ENCODE measurements at regions of chr2 and their contacts with region 1.

Region 1: GRCh38 chr2:157509744-157510143 is 65.9 kb upstream of the CYTIP start:
- DNase-seq: no peak
- ATAC-seq: no peak
- H3K4me3 ChIP-seq: no peak overlapping the region
- H3K4me3 Mint-ChIP-seq: no peak overlapping the region
- H3K27ac ChIP-seq: no peak overlapping the region
- H3K27ac Mint-ChIP-seq: no peak overlapping the region
- H3K4me1 ChIP-seq: peaks cover 4 to 6% of the 10 kb centered on the region in 2 donors
- H3K4me1 Mint-ChIP-seq: peaks cover 5% of the 10 kb centered on the region
- H3K27me3 ChIP-seq: peaks cover 0 to 3% (median 0%) of the 10 kb centered on the region in 4 experiments
- H3K27me3 Mint-ChIP-seq: peaks cover 6% of the 10 kb centered on the region
- CTCF ChIP-seq: no peak

Region 2: GRCh38 chr2:157386247-157386646 is 123.5 kb before region 1 on chr2:
- CTCF ChIA-PET with region 1: no interaction called
- POLR2A ChIA-PET with region 1: no interaction called
- intact Hi-C with region 1: no loop called
- DNase-seq: no peak
- ATAC-seq: no peak
- H3K4me3 ChIP-seq: no peak overlapping the region
- H3K4me3 Mint-ChIP-seq: no peak overlapping the region
- H3K27ac ChIP-seq: peak overlapping the region in 1 of 2 donors; percentile 47
- H3K27ac Mint-ChIP-seq: peak overlapping the region; percentile 38
- H3K4me1 ChIP-seq: peaks cover 0 to 9% of the 10 kb centered on the region in 2 donors
- H3K4me1 Mint-ChIP-seq: peaks cover 31% of the 10 kb centered on the region
- H3K27me3 ChIP-seq: no peaks in the 10 kb centered on the region
- H3K27me3 Mint-ChIP-seq: no peaks in the 10 kb centered on the region
- CTCF ChIP-seq: no peak

Region 3: DNA sequence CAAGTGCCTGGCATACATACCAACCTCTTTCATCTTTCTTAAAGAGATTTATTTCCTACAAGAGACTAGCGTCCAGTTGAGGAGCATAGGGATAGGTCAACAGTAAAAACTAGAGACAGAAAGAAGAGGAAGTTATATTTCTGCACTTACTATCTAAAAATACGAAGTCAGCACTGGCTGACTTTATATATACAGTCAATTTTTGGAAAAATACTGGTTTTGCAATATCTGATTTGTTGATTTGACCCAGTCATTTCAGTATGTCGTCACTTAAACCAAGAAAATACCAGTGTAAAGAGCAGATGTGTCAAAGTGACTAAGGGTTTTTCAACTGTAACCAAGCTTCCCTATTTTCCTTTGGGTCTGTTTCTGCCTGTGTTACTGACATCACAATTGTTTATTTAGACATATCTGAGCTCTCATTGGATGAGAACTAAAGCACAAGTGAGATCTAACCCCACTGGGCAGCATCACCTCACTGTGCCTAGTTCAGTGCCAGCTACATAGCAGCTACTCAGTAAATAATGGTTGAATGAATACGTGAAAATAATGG is 88.9 kb before region 1 on chr2:
- CTCF ChIA-PET with region 1: no interaction called
- POLR2A ChIA-PET with region 1: no interaction called
- intact Hi-C with region 1: no loop called
- DNase-seq: peak; percentile 77
- ATAC-seq: peak; percentile 71
- H3K4me3 ChIP-seq: no peak overlapping the region
- H3K4me3 Mint-ChIP-seq: peak overlapping the region; percentile 78
- H3K27ac ChIP-seq: peak overlapping the region; percentile 58 to 88
- H3K27ac Mint-ChIP-seq: peak overlapping the region; percentile 94
- H3K4me1 ChIP-seq: peaks cover 49 to 52% of the 10 kb centered on the region in 2 donors
- H3K4me1 Mint-ChIP-seq: peaks cover 57% of the 10 kb centered on the region
- H3K27me3 ChIP-seq: no peaks in the 10 kb centered on the region
- H3K27me3 Mint-ChIP-seq: no peaks in the 10 kb centered on the region
- CTCF ChIP-seq: no peak

Region 4: GRCh38 chr2:157441072-157441454 is 68.7 kb before region 1 on chr2:
- CTCF ChIA-PET with region 1: no interaction called
- POLR2A ChIA-PET with region 1: no interaction called
- intact Hi-C with region 1: no loop called
- DNase-seq: peak; percentile 78
- ATAC-seq: peak; percentile 31
- H3K4me3 ChIP-seq: peak overlapping the region; percentile 82 to 98 (median 92)
- H3K4me3 Mint-ChIP-seq: peak overlapping the region; percentile 94
- H3K27ac ChIP-seq: peak overlapping the region; percentile 93 to 96
- H3K27ac Mint-ChIP-seq: peak overlapping the region; percentile 95
- H3K4me1 ChIP-seq: peaks cover 54 to 63% of the 10 kb centered on the region in 2 donors
- H3K4me1 Mint-ChIP-seq: peaks cover 45% of the 10 kb centered on the region
- H3K27me3 ChIP-seq: no peaks in the 10 kb centered on the region
- H3K27me3 Mint-ChIP-seq: no peaks in the 10 kb centered on the region
- CTCF ChIP-seq: no peak

Region 5: GRCh38 chr2:157497638-157498314 is 12.0 kb before region 1 on chr2:
- CTCF ChIA-PET with region 1: interaction called, 15 read pairs
- POLR2A ChIA-PET with region 1: no interaction called
- intact Hi-C with region 1: no loop called
- DNase-seq: peak; percentile 58
- ATAC-seq: peak; percentile 71
- H3K4me3 ChIP-seq: no peak overlapping the region
- H3K4me3 Mint-ChIP-seq: no peak overlapping the region
- H3K27ac ChIP-seq: no peak overlapping the region
- H3K27ac Mint-ChIP-seq: no peak overlapping the region
- H3K4me1 ChIP-seq: peaks cover 23 to 27% of the 10 kb centered on the region in 2 donors
- H3K4me1 Mint-ChIP-seq: peaks cover 41% of the 10 kb centered on the region
- H3K27me3 ChIP-seq: no peaks in the 10 kb centered on the region
- H3K27me3 Mint-ChIP-seq: no peaks in the 10 kb centered on the region
- CTCF ChIP-seq: peak; percentile 88

Region 6: DNA sequence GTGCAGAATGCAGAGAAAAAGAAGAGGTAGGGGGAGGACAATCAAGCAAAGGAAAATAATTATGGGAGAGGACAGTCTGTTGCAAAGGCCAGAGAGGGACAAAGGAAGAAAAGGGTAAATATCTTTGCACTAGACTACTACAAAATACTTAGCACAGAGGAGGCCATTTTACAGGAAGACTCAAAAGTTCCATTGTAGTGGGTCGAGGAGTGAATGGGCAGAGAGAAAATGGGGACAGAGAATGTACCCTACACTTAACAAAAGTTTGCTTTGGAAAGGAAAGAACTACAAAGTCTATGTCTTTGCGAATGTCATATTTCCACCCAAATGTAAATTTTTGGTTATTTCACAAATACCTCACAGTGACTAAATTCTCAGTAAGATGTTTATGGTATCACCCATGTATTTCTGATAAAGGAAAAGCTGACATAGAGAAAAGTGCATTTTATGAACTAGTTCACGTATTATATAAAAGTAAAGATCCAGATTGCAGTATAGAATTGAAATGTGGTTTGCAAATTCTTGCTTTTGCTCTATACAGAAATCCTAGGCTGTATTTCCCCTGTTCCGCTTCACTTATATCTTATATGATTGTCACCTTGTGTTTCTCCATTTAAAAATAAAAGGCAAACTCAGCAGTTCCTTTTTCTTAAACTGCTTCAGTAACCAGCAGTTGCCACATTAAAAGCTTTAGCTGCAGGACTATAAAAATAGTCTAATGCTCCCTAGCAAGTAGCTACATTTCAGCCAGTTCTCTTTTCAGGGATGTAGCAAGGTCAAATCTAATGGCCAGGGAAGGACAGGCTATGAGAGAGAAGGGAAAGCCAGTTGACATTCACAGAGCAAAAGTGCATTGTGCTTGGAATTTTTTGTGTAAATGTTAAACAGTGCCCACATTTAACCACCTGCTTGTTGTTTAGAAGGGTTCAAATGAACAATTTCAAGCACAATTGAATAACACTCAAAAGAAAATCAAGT is 13.8 kb after region 1 on chr2:
- CTCF ChIA-PET with region 1: interaction called, 3 read pairs
- POLR2A ChIA-PET with region 1: no interaction called
- intact Hi-C with region 1: loop called (anchors 2 kb)
- DNase-seq: peak; percentile 53
- ATAC-seq: peak; percentile 69
- H3K4me3 ChIP-seq: peak overlapping the region in 1 of 5 experiments; percentile 24
- H3K4me3 Mint-ChIP-seq: peak overlapping the region; percentile 4
- H3K27ac ChIP-seq: peak overlapping the region in 1 of 2 donors; percentile 32
- H3K27ac Mint-ChIP-seq: peak overlapping the region; percentile 1
- H3K4me1 ChIP-seq: peaks cover 13 to 16% of the 10 kb centered on the region in 2 donors
- H3K4me1 Mint-ChIP-seq: peaks cover 25% of the 10 kb centered on the region
- H3K27me3 ChIP-seq: no peaks in the 10 kb centered on the region
- H3K27me3 Mint-ChIP-seq: peaks cover 1% of the 10 kb centered on the region
- CTCF ChIP-seq: no peak

Region 7: DNA sequence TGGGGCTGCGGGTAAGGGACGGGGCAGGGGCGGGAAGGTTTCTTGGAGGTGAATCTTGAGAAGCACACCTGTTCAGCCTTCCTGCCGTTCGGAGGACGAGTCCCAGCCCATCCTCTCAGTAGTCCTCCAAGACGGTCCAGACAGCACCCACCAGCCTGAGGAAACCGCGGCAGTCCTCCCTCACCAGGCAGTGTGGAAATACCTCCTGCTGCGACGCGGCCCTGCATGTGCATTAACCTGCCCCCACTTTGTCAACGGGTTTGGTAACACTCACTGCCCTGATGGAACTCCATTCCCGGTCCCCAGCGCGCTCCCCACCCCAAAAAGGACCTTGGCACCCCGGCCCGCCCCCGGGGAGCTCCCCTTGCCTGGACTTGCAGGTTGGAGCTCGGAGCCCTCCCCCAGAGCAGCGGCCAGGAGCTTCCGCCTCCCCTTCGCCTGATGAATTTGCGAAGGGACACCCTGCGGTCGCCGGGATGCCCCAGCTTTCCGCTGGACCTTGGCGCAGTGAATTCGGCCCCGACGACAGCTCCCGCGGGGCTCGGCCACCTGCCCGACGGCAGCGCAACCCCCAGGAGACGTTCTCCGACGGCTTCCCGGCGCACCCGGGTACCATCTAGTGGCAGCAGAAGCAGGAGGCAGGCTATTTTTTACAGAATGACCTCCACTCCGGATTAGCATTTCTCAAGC is 87.4 kb after region 1 on chr2:
- CTCF ChIA-PET with region 1: interaction called, 13 read pairs
- POLR2A ChIA-PET with region 1: no interaction called
- intact Hi-C with region 1: no loop called
- DNase-seq: peak; percentile 67
- ATAC-seq: peak; percentile 84
- H3K4me3 ChIP-seq: peak overlapping the region in 3 of 5 experiments; percentile 6 to 42 (median 27)
- H3K4me3 Mint-ChIP-seq: peak overlapping the region; percentile 66
- H3K27ac ChIP-seq: no peak overlapping the region
- H3K27ac Mint-ChIP-seq: no peak overlapping the region
- H3K4me1 ChIP-seq: peaks cover 0 to 4% of the 10 kb centered on the region in 2 donors
- H3K4me1 Mint-ChIP-seq: peaks cover 7% of the 10 kb centered on the region
- H3K27me3 ChIP-seq: peaks cover 0 to 8% (median 2%) of the 10 kb centered on the region in 4 experiments
- H3K27me3 Mint-ChIP-seq: peaks cover 16% of the 10 kb centered on the region
- CTCF ChIP-seq: peak; percentile 75

Region 8: DNA sequence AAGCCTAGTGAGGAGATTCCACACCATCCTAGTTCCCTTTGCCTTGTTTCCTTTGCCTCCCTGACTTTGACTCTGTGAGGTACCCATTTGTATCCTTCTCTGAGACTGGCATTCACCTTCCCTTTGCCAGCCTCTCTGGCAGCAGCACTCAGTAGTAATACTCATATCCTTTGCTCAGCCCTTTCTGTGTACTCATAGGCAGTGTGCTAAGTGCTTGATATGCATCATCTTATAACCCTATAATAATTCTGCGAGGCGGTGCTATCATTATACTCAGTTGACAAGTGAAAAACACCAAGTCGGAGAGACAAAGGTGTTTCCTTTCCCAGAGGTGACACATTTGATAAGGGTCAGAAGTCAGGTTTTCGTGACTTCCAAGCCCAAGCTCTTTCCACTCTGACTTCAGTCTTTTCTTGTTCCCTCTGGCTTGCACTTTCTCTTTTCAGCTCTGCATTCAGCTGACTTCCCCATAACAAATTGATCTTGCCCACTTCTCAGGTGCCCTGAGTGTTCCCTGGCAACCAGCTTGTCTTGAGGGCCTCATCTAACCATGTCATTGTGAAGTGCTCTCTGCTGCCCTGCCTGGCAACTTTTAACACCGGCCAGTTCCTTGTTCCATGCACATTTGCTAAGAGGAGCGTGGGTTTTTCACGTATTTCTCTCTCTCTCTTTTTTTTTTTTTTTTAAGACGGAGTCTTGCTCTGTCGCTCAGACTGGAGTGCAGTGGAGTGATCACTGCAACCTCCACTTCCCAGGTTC is 497.4 kb after region 1 on chr2:
- CTCF ChIA-PET with region 1: interaction called, 11 read pairs
- POLR2A ChIA-PET with region 1: no interaction called
- intact Hi-C with region 1: no loop called
- DNase-seq: peak; percentile 42
- ATAC-seq: peak; percentile 41
- H3K4me3 ChIP-seq: no peak overlapping the region
- H3K4me3 Mint-ChIP-seq: no peak overlapping the region
- H3K27ac ChIP-seq: no peak overlapping the region
- H3K27ac Mint-ChIP-seq: no peak overlapping the region
- H3K4me1 ChIP-seq: no peaks in the 10 kb centered on the region
- H3K4me1 Mint-ChIP-seq: peaks cover 5% of the 10 kb centered on the region
- H3K27me3 ChIP-seq: peaks cover 0 to 4% (median 2%) of the 10 kb centered on the region in 4 experiments
- H3K27me3 Mint-ChIP-seq: peaks cover 17% of the 10 kb centered on the region
- CTCF ChIP-seq: no peak

Region 9: DNA sequence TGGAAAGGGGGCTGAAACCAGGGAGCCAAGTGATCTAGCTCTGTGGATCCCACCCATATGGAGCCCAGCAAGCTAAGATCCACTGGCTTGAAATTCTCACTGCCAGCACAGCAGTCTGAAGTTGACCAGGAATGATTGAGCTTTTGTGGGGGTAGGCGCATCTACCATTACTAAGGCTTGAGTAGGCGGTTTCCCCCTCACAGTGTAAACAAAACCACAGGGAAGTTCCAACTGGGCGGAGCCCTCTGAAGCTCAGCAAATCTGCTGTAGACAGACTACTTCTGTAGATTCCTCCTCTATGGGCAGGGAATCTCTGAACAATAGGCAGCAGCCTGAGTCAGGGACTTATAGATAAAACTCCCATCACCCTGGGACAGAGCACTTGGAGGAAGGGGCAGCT is 850.1 kb after region 1 on chr2:
- CTCF ChIA-PET with region 1: no interaction called
- POLR2A ChIA-PET with region 1: no interaction called
- intact Hi-C with region 1: no loop called
- DNase-seq: no peak
- ATAC-seq: no peak
- H3K4me3 ChIP-seq: no peak overlapping the region
- H3K4me3 Mint-ChIP-seq: no peak overlapping the region
- H3K27ac ChIP-seq: no peak overlapping the region
- H3K27ac Mint-ChIP-seq: no peak overlapping the region
- H3K4me1 ChIP-seq: no peaks in the 10 kb centered on the region
- H3K4me1 Mint-ChIP-seq: no peaks in the 10 kb centered on the region
- H3K27me3 ChIP-seq: no peaks in the 10 kb centered on the region
- H3K27me3 Mint-ChIP-seq: no peaks in the 10 kb centered on the region
- CTCF ChIP-seq: no peak

Measured in B cell (primary cell).